ENCODE measurements at regions of chr1 and their contacts with region 1.

Region 1: DNA sequence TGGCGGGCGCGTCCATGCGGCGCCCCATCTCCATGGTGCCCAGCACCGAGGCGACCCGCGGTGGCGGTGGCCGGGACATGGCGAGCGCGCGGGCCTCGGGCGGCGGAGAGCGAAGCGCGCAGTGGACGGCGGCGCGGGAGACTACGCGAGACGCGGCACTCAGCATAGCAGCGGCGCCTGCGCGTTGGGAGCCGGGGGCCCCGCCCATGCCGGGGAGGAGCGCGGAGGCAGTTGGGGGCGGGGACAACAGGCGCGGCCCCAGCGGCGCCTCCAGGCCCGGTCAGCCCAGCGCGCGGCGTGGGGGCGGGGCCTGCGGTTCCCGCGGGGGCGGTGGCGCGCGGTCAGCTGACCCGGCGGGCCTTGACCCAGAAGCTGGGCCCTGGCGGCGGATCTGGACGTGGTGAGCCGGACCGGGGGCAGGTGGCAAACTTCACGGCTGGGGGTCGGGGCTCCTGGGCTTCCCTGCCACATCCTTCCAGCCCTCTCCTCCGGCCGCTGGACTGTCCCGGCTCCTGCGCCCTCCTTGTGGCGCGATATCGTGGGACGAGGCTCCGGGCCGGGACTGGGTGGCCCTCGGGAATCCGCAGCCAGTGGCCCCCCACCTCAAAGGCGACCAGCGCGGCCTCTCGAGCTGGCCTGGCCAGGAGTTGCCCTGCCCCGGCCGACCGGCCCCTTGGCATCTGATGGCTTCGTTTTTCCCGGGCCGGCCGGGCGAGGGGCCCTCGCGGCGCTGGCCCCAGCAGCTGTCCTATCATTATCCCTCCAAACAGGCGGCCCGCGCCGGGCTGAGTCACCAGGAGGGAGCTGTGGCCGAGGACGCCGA is at the starts of genes AKR7A2 and SLC66A1:
- DNase-seq: peak; percentile 89
- ATAC-seq: peak; percentile 93
- H3K4me3 ChIP-seq: peak within 1 kb of the TSS; percentile 96
- H3K27ac ChIP-seq: peak within 1 kb of the TSS; percentile 87
- H3K4me1 ChIP-seq: peaks cover 27% of the 10 kb centered on the region
- H3K27me3 ChIP-seq: no peaks in the 10 kb centered on the region
- CTCF ChIP-seq: no peak
- POLR2A ChIP-seq: peak; percentile 81
- RAD21 ChIP-seq: no peak
- total RNA-seq, gene AKR7A2: 50.5 and 60.2 TPM in 2 replicates
- total RNA-seq, gene SLC66A1: 6.8 and 7.5 TPM in 2 replicates

Region 2: GRCh38 chr1:19251305-19252196 is 60.6 kb before region 1 on chr1 and contains the starts of genes EMC1 and MRTO4:
- CTCF ChIA-PET with region 1: no interaction called
- POLR2A ChIA-PET with region 1: no interaction called
- dilution Hi-C with region 1: no loop called
- in situ Hi-C with region 1: no loop called
- intact Hi-C with region 1: loop called (anchors 5 kb)
- DNase-seq: peak; percentile 73
- ATAC-seq: peak; percentile 97
- H3K4me3 ChIP-seq: peak within 1 kb of the TSS; percentile 87
- H3K27ac ChIP-seq: peak within 1 kb of the TSS; percentile 96
- H3K4me1 ChIP-seq: 0 out of 2 replicates have a peak, but pooled peaks cover 2% of the 10 kb centered on the region
- H3K27me3 ChIP-seq: no peaks in the 10 kb centered on the region
- CTCF ChIP-seq: no peak
- POLR2A ChIP-seq: peak; percentile 92
- RAD21 ChIP-seq: no peak
- total RNA-seq, gene EMC1: 55.3 and 65.4 TPM in 2 replicates
- total RNA-seq, gene MRTO4: 58.0 and 58.1 TPM in 2 replicates

Region 3: DNA sequence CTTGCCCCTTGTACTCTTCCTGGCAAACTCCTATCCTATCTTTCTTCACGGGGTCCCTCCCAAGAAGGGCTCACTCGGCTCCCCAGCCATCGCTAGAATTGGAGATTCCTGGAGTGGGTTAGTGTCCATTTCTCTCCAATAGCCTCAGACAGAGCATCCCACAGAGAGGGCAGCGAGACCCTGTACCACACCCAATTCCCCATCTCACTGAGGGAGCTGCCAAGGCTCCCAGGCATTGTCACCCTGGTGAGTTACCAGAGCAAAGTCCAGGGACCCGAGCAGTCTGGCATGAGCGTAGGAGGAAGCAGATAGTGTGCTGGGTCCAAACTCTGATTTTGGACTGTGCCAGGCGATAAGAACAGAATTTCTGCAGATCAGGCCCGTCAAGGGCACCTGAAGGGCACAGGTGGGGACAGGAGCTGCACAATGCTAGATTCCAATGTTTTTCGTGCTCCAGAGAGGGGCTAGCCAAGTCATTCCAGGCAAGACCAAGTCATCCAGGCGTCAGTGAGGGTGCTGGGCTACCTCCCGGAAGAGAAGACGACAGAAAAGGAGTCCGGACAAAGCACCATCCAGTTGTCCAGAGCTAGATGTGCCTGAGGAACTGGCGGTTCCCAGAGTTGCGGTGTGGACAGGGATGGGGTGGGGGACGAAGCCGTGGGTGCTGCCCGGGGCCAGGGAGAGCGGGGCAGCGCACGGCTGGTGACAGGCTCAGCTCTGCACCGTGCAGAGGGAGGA is 38.9 kb before region 1 on chr1:
- CTCF ChIA-PET with region 1: no interaction called
- POLR2A ChIA-PET with region 1: interaction called, 11 read pairs
- dilution Hi-C with region 1: no loop called
- in situ Hi-C with region 1: no loop called
- intact Hi-C with region 1: no loop called
- DNase-seq: no peak
- ATAC-seq: no peak
- H3K4me3 ChIP-seq: no peak overlapping the region
- H3K27ac ChIP-seq: no peak overlapping the region
- H3K4me1 ChIP-seq: no peaks in the 10 kb centered on the region
- H3K27me3 ChIP-seq: no peaks in the 10 kb centered on the region; the same call in 1 of the 2 replicates
- CTCF ChIP-seq: no peak
- POLR2A ChIP-seq: no peak
- RAD21 ChIP-seq: no peak

Region 4: DNA sequence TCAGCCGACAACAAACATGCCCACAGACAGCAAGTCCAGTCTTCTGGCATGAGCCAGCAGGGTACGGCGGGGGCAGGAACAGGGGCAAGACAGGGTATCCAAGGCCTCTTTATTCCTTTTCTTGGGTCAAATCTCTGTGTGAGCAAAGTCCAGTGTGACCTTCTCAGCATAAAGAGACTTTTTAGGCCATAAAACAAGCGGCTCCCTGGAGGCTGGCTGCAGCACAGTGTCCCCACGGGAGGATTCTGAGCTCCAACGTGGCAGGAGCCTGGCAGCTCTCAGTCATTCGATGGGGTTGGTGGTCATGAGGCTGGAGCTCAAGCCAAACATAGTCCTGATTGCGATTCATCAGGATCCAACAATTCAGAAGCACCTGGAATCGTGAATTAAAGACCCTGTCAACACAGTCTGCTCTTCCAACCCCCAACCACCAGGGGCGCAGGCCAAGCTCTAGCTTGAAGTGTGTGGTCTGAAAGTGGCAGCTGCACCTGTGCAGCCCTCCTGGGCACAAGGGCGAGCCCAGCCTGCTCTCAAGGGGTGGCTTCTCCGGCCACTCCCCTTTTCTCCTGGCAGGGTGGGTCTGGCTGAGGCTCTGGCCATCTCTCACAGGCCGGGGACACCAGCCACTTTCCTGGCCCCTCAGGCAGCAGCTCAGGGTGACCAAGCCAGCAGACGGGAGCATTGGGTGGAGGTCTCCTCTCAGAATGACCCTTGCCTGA is 62.1 kb after region 1 on chr1:
- CTCF ChIA-PET with region 1: no interaction called
- POLR2A ChIA-PET with region 1: no interaction called
- dilution Hi-C with region 1: no loop called
- in situ Hi-C with region 1: no loop called
- intact Hi-C with region 1: no loop called
- DNase-seq: no peak
- ATAC-seq: 0 out of 2 replicates have a peak, but pooled peaks have one; percentile 37
- H3K4me3 ChIP-seq: no peak overlapping the region
- H3K27ac ChIP-seq: no peak overlapping the region
- H3K4me1 ChIP-seq: no peaks in the 10 kb centered on the region
- H3K27me3 ChIP-seq: no peaks in the 10 kb centered on the region
- CTCF ChIP-seq: peak; percentile 22; the same call in 1 of the 2 replicates
- POLR2A ChIP-seq: no peak
- RAD21 ChIP-seq: no peak

Region 5: DNA sequence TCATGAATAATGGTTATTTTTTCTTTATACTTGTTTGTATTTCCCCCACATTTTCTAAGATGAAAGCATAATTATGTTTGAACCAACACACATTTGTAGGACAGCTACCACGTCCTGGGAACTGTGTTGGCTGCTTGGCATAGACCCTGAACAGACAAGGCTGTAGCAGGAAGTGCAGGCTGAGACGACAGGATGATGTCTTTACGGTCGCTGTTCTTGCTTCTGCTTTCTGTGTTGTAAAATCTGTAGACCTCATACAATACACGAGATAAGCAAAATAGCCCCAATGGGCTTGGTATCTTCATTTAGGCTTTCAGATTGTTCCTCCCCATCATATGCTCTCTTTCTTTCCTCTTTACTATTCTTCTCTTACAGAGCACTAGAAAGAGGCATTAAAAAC is 546.7 kb after region 1 on chr1:
- CTCF ChIA-PET with region 1: no interaction called
- POLR2A ChIA-PET with region 1: no interaction called
- dilution Hi-C with region 1: no loop called
- in situ Hi-C with region 1: no loop called
- intact Hi-C with region 1: no loop called
- DNase-seq: no peak
- ATAC-seq: no peak
- H3K4me3 ChIP-seq: no peak overlapping the region
- H3K27ac ChIP-seq: no peak overlapping the region
- H3K4me1 ChIP-seq: peaks cover 3% of the 10 kb centered on the region; the same call in 1 of the 2 replicates
- H3K27me3 ChIP-seq: peaks cover 3% of the 10 kb centered on the region
- CTCF ChIP-seq: no peak
- POLR2A ChIP-seq: no peak
- RAD21 ChIP-seq: no peak

Measured in IMR-90 (cell line).